Heart right ventricle (tissue), 16 donors: ENCODE measurements at regions of chr12 and their contacts with region 1.

Region 1: GRCh38 chr12:22088886-22089285 is 42.9 kb downstream of the CMAS start:
- DNase-seq: no peak
- ATAC-seq: no peak
- H3K4me3 ChIP-seq: no peak overlapping the region
- H3K27ac ChIP-seq: no peak overlapping the region
- H3K4me1 ChIP-seq: no peaks in the 10 kb centered on the region
- H3K27me3 ChIP-seq: no peaks in the 10 kb centered on the region
- CTCF ChIP-seq: no peak

Region 2: DNA sequence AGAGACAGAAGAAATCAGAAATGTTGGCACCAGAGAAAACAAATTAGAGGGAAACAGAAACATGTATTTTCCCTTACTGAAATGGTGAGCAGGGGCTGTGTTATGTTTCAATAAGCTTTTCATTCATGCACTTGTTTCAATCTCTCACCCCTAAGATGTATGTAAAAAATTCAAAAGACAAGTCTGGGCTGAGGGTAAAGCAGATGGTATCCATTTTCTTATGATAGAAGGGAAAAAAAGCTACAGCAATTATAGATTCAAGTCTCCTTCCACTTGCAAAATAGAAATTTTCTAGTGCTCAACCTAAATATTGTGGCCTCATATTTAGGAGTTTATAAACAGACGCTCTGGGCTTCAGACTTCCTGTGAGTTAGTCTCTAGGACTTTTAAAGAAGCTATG is 107.3 kb after region 1 on chr12:
- intact Hi-C with region 1: no loop called
- DNase-seq: no peak
- ATAC-seq: no peak
- H3K4me3 ChIP-seq: no peak overlapping the region
- H3K27ac ChIP-seq: no peak overlapping the region
- H3K4me1 ChIP-seq: no peaks in the 10 kb centered on the region
- H3K27me3 ChIP-seq: no peaks in the 10 kb centered on the region
- CTCF ChIP-seq: no peak

Region 3: DNA sequence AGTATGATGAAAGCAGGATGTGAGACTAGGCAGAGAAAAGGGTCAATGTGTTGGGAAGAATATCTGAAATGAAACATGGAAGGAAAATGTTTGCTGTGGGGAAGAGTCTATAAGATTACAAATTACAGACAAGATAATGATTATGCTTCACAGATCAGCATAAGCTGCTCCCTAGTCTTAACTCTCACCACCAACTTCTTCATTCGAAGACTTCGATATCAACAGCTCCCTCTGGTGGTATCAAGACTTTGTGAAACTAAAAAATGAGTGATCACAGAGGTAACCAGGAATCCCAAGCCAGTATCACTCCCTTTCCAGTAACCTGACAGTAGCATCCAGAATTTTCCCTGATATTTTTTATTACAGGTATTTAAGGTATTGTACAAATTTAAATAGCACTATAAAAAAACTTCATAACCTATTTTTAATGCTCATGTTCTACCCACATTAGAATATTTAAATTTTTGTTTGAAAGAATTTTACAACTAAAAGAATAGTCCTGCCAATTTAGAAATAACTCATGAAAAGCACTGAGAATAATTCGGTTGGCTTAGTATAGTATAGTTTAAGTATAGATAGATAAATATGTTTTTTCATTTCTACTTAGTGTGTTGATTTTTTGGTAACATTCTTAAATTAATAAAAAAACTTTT is 371.1 kb after region 1 on chr12:
- intact Hi-C with region 1: loop called in 4 of 10 experiments (anchors 5 kb)
- DNase-seq: no peak
- ATAC-seq: peak in 2 of 8 donors; percentile 24 to 37
- H3K4me3 ChIP-seq: no peak overlapping the region
- H3K27ac ChIP-seq: no peak overlapping the region
- H3K4me1 ChIP-seq: no peaks in the 10 kb centered on the region
- H3K27me3 ChIP-seq: no peaks in the 10 kb centered on the region
- CTCF ChIP-seq: peak in 8 of 9 donors; percentile 35 to 74 (median 63)

Region 4: GRCh38 chr12:22938323-22938722 is 849.4 kb after region 1 on chr12:
- intact Hi-C with region 1: no loop called
- DNase-seq: no peak
- ATAC-seq: no peak
- H3K4me3 ChIP-seq: no peak overlapping the region
- H3K27ac ChIP-seq: no peak overlapping the region
- H3K4me1 ChIP-seq: no peaks in the 10 kb centered on the region
- H3K27me3 ChIP-seq: no peaks in the 10 kb centered on the region
- CTCF ChIP-seq: no peak

Region 5: DNA sequence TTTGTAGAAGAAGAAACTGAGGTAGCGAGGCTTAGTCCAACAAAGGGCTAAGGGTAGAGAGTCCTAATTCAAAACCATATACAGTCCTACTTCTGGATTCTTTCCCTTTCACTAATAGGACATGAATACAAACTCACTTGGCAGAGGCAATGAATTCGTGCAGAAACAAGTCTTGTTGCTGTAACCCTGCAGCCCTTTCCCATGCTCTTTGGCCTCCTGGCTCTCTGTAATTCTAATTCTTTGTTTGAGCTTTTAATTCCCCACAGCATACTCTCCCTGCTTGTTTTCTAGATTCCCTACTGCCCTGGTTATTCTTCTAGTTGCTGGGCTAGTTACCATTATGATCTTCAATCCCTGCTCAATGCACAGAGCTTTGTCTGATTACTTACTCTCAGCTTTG is 917.5 kb after region 1 on chr12:
- intact Hi-C with region 1: no loop called
- DNase-seq: peak; percentile 32 to 55
- ATAC-seq: peak in 5 of 8 donors; percentile 28 to 76 (median 41)
- H3K4me3 ChIP-seq: no peak overlapping the region
- H3K27ac ChIP-seq: no peak overlapping the region
- H3K4me1 ChIP-seq: peaks cover 0 to 14% (median 0%) of the 10 kb centered on the region in 9 donors
- H3K27me3 ChIP-seq: no peaks in the 10 kb centered on the region
- CTCF ChIP-seq: no peak